Activated CD4-positive, alpha-beta T cell treated with anti-CD3 and anti-CD28 coated beads, Interleukin-2, amount 10 ng/mL, durations not matched to agents 7 days and 5 days (primary cell): ENCODE measurements at regions of chr19 and their contacts with region 1.

Region 1: DNA sequence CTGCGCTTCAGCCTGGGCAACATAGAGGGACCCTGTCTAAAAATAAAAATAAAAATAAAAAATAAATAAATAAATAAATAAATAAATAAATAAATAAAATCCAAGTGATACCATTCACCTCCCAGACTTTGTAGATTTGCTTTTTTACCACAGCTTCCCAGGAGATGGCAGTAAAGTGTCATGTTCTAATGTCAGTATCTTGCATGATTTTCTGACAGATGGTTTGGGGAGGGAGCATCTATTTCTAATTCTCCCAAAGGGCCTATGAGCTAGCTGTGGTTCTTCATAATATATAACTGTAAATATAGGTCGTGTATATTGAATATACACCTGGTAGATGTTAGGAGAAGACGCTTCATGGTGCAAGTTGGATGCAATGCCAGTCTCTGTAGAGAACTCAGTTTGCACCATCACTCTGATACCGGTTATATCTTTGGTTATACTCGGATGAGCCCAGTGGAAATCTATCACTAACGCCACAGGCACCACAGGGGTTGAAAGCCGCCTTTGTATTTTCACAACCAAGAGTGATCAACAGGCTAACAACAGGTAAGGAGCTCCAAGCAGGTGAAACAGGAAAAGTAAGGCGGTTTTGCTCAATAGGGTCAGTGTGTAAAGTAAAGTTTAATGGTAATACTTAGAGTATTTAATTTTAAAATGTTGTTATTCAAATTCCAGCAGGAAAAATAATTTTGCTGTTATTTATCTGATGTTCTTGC is 13.9 kb downstream of the APLP1 start:
- DNase-seq: peak; percentile 78
- H3K4me3 Mint-ChIP-seq: no peak overlapping the region
- H3K27ac Mint-ChIP-seq: no peak overlapping the region
- H3K4me1 Mint-ChIP-seq: peaks cover 11% of the 10 kb centered on the region
- H3K27me3 Mint-ChIP-seq: peaks cover 14% of the 10 kb centered on the region

Region 2: DNA sequence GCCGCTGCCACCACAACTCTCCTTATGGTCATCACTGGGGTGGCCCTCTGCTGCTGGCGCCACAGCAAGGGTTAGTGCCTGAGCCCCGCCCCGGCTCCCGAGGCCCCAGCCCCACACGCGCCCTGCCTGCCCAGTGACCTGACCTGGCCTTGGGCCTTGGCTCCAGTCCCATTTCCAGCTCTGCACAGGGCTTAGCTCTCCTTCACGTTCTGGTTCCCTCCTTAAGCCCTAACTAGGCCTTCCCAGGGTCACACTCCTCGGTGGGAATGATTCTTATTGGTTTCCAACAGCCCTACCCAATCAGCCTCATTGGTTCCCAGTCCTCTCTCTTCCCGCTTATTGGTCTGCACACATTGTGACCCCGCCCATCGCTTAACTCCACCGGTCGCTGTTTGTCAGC is 19.7 kb before region 1 on chr19:
- CTCF ChIA-PET with region 1: no interaction called
- POLR2A ChIA-PET with region 1: no interaction called
- DNase-seq: no peak
- H3K4me3 Mint-ChIP-seq: no peak overlapping the region
- H3K27ac Mint-ChIP-seq: no peak overlapping the region
- H3K4me1 Mint-ChIP-seq: peaks cover 3% of the 10 kb centered on the region
- H3K27me3 Mint-ChIP-seq: peaks cover 62% of the 10 kb centered on the region

Region 3: GRCh38 chr19:35894342-35894741 is 12.1 kb after region 1 on chr19:
- CTCF ChIA-PET with region 1: interaction called, 23 read pairs
- POLR2A ChIA-PET with region 1: interaction called, 3 read pairs
- DNase-seq: no peak
- H3K4me3 Mint-ChIP-seq: no peak overlapping the region
- H3K27ac Mint-ChIP-seq: no peak overlapping the region
- H3K4me1 Mint-ChIP-seq: peaks cover 25% of the 10 kb centered on the region
- H3K27me3 Mint-ChIP-seq: no peaks in the 10 kb centered on the region

Region 4: GRCh38 chr19:35931161-35931873 is 49.0 kb after region 1 on chr19:
- CTCF ChIA-PET with region 1: interaction called, 29 read pairs
- POLR2A ChIA-PET with region 1: no interaction called
- DNase-seq: peak; percentile 100
- H3K4me3 Mint-ChIP-seq: peak overlapping the region; percentile 70
- H3K27ac Mint-ChIP-seq: peak overlapping the region; percentile 93
- H3K4me1 Mint-ChIP-seq: peaks cover 46% of the 10 kb centered on the region
- H3K27me3 Mint-ChIP-seq: no peaks in the 10 kb centered on the region